Activated naive CD4-positive, alpha-beta T cell treated with anti-CD3 and anti-CD28 coated beads, Interleukin-2, amount 10 ng/mL, durations not matched to agents 7 days and 5 days (primary cell): ENCODE measurements at regions of chr12 and their contacts with region 1.

Region 1: DNA sequence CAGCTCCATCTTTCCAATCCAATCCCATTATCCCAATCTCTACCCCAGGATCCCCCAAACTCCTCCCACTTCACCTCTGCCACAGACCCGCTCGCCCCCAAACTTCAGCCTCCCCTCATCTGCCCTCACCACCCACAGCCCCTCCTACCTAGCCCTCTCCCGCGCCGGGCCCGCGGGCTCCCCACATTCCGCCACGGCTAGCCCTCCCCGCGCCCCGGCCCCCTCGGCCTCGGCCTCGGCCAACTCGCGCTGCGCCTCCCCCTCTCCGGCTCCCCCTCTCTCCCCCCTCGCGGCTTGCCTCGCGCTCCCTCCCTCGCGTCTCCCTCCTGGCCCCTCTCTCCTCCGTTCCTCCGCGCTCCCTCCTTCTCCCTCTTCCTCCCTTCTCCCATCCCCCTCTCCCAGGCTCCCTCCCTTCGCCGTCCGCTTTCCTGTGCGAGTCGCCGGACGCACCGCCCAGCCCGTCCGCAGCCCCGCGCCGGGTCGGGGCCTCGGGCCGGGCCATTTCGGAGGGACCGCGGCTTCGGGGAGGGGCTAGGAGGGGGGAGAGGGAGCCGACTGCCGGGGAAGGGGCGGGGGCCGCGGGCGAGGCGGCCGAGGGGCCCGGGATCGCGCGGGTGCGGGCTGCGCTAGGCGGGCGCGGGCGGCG is at the start of gene ATN1:
- DNase-seq: peak; percentile 70
- H3K4me3 Mint-ChIP-seq: peak within 1 kb of the TSS; percentile 81
- H3K27ac Mint-ChIP-seq: peak within 1 kb of the TSS; percentile 67
- H3K4me1 Mint-ChIP-seq: peaks cover 67% of the 10 kb centered on the region
- H3K27me3 Mint-ChIP-seq: peaks cover 23% of the 10 kb centered on the region

Region 2: DNA sequence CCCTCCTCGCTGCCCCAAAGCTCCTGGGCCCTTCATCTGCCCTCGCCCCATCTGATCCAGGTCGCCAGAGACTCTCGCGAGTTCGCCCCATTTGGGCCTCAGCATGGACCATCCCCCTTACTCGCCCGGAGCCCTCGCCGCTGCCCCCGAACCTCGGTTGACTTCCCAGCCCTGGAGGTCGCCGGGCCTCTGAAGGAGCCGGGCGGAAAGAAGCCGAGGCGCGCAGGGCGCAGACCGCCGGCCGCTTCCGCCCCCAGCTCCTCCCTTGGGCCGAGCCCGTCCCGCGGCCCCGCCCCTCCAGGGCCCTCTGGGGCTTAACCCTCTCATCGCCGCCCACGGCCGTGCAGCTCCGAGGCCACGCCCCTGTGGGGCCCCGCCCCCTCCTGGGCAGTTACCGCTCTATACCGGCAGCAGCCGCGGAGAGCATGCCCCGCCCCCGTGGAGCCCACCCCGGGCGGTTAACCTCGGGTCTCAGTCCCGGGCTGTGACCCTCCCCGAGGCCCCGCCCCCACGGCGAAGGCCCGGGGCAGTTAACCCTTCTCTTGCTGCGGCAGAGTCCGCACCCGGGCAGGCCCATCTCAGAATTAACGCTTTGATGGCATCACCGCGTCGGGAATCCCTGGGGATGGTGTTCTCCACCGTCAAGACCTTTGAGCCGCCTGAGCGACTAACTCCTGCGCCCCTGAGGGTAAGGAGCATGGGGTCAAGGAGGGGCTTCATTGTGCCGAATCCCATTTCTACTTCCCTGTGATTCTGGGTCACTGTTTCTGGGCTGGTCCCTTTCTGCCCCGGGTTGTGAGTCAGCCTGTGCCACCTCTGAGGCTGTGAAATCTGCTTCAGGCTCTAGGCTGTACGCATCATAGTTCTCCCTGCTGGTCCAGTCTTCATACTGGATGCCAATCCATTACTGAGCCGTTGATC is 54.1 kb before region 1 on chr12 and contains the start of gene SPSB2:
- CTCF ChIA-PET with region 1: interaction called, 12 read pairs
- DNase-seq: peak; percentile 99
- H3K4me3 Mint-ChIP-seq: peak within 1 kb of the TSS; percentile 90
- H3K27ac Mint-ChIP-seq: peak within 1 kb of the TSS; percentile 93
- H3K4me1 Mint-ChIP-seq: peaks cover 57% of the 10 kb centered on the region
- H3K27me3 Mint-ChIP-seq: no peaks in the 10 kb centered on the region

Region 3: GRCh38 chr12:6937481-6938297 is 10.2 kb after region 1 on chr12:
- CTCF ChIA-PET with region 1: interaction called, 33 read pairs
- DNase-seq: peak; percentile 95
- H3K4me3 Mint-ChIP-seq: peak overlapping the region; percentile 82
- H3K27ac Mint-ChIP-seq: peak overlapping the region; percentile 97
- H3K4me1 Mint-ChIP-seq: peaks cover 58% of the 10 kb centered on the region
- H3K27me3 Mint-ChIP-seq: no peaks in the 10 kb centered on the region

Region 4: GRCh38 chr12:6944381-6945186 is 17.1 kb after region 1 on chr12:
- CTCF ChIA-PET with region 1: interaction called, 33 read pairs
- DNase-seq: peak; percentile 93
- H3K4me3 Mint-ChIP-seq: peak overlapping the region; percentile 84
- H3K27ac Mint-ChIP-seq: peak overlapping the region; percentile 96
- H3K4me1 Mint-ChIP-seq: peaks cover 67% of the 10 kb centered on the region
- H3K27me3 Mint-ChIP-seq: no peaks in the 10 kb centered on the region